ENCODE measurements at regions of chr1 and their contacts with region 1.

Region 1: DNA sequence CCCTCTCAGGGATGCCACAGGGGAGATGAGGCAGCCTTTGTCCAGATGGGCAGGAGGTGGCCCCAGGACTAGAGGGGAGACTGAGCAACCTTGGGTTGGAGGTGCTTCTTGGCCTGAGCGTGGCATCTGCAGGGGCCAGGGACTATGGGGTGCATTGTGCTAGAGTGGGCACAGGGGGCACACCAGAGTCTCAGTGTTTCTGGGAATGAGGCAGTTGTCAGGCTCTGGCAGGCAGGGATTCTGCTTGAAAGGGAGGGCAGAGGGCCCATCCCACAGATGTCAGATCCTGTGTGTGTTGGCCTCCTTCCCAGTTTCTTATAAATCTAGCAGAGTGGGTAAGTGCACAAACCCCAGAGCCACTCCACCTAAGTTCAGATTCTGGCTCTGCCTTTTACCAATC is 13.7 kb downstream of the LGR6 start:
- DNase-seq: peak; percentile 79
- H3K4me3 ChIP-seq: no peak overlapping the region
- CTCF ChIP-seq: peak; percentile 49

Region 2: GRCh38 chr1:201877877-201878401 is 329.4 kb before region 1 on chr1:
- in situ Hi-C with region 1: no loop called
- DNase-seq: peak; percentile 48
- H3K4me3 ChIP-seq: no peak overlapping the region
- CTCF ChIP-seq: peak; percentile 75

Region 3: DNA sequence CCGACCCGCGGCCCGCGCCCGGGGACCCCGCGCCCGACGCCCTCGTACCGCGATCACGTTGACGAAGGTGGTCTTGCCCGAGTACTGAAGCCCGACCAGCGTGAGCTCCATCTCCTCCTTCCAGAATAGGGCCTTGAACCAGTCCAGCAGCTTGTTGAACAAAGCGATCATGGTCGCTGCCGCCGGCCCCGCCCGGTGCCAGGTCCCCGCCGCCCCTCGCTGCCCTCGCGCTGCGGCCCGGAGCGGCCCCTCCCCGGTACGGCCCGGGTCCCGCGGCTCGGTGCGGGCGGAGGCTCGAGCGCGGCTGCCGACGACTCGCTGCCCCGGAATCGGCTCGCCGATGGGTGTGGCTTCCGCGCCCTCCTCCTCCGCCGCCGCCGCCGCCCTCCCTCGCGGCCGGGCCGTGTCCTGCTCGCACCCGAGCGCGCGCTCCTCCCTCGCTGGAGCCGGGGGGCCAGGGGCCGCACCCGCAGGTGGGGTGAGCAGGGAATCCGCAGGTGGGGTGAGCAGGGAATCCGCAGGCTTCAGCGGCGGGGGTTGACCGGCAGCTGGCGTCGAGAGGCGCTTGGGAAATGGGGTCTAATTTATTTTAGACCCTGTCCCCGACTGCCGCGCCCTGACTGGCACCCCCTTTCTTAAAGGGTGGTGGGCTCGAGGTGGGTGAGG is 62.8 kb before region 1 on chr1 and contains the start of gene ARL8A:
- in situ Hi-C with region 1: no loop called
- DNase-seq: no peak
- H3K4me3 ChIP-seq: peak within 1 kb of the TSS; percentile 86
- CTCF ChIP-seq: no peak

Region 4: DNA sequence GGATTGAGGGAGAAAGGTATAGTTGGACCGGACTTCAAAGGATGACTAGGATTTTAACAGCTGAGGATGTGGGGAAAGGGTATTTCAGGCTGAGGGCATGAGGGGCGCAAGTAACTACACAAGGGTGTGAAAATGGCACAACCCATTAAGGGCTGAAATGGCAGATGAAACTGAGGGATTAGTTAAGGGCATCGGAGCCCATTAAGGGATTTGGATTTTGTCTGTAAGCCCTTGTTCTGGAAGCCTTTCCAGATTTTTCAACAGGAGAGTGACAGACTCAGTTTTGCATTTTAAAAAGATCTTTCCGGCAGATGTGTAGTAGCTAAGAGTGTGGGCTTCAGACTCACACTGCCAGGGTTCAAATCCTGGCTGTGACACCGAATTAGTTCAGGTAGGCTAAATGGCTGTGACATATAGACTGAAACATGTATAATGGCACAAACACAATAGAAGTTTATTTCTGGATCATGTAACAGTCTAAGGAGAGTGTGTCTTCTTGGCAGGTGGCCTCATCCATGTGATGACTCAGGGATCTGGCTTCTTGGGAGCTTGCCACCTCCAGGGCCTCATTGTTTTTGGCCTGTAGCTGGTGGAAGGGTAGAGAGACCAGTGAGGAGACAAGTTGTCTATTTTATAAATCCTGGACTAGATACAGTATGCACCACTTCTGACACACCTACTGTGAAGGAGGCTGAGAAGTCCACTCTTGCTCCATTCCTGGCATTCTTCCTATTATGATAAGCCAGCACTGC is 84.8 kb after region 1 on chr1:
- in situ Hi-C with region 1: no loop called
- DNase-seq: peak; percentile 94
- H3K4me3 ChIP-seq: no peak overlapping the region
- CTCF ChIP-seq: no peak

Region 5: GRCh38 chr1:202315576-202316168 is 108.4 kb after region 1 on chr1:
- in situ Hi-C with region 1: loop called (anchors 10 kb)
- DNase-seq: peak; percentile 59
- H3K4me3 ChIP-seq: no peak overlapping the region
- CTCF ChIP-seq: peak; percentile 99

Region 6: DNA sequence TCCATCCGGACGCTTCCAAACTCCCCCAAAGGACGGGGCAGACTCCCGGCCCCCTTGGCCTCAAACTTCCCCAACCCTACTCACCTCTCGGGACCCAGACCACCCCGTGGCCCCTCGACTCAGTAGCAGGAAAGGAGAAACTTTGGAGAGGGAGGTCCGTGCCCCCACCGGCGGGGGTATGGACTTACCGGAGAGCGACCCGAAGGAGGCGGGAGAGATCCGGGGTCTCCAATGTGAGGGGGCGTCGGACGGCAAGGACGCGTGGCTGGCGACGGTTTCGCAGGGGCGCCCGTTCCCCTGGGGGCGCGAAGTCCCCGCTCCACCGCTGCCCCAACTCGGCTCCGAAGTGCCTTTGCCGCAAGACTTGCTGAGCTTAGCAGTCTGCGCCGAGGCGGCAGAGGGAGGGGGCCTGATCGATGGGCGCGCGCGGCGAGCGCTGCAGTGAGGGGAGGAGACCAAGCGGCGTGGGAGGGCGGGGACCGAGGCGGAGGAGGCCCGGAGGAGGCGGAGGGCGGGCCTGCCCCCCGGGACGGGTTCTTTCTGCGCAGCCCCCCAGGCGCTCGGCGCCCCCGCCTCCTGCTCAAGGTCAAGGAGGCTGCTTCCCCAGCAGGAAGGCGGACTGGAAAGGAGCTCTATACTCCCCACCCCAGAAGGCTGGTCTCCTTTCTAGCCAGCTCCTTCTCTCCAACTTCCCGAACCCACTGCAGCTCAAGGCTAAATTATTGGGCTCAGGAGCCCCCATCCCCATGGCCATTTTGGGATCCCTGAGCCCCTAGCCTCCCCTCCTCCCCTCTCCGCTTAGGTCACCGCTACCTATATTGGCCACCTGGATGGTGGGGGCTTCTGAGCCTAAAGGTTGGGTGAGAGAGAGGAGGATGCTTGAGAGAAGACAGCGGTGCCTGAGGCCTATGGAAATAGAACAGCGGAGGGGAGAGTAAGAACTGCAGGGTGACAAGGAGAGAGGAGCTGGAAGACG is 503.1 kb after region 1 on chr1 and contains the start of gene SYT2:
- in situ Hi-C with region 1: loop called (anchors 25 kb)
- DNase-seq: no peak
- H3K4me3 ChIP-seq: peak within 1 kb of the TSS; percentile 34
- CTCF ChIP-seq: no peak

Measured in astrocyte of the cerebellum (primary cell).